Breast epithelium (tissue), 4 donors: ENCODE measurements at regions of chr15 and their contacts with region 1.

Region 1: GRCh38 chr15:89057504-89058133 is 30.6 kb upstream of the ABHD2 start:
- DNase-seq: peak; percentile 64 to 86
- H3K4me3 ChIP-seq: no peak overlapping the region
- H3K27ac ChIP-seq: no peak overlapping the region
- H3K4me1 ChIP-seq: no peaks in the 10 kb centered on the region
- H3K27me3 ChIP-seq: no peaks in the 10 kb centered on the region
- CTCF ChIP-seq: peak; percentile 91 to 97 (median 93)
- POLR2A ChIP-seq: no peak

Region 2: GRCh38 chr15:89003865-89004725 is 53.5 kb before region 1 on chr15:
- intact Hi-C with region 1: no loop called
- DNase-seq: no peak
- H3K4me3 ChIP-seq: no peak overlapping the region
- H3K27ac ChIP-seq: no peak overlapping the region
- H3K4me1 ChIP-seq: peaks cover 0 to 12% of the 10 kb centered on the region in 2 donors
- H3K27me3 ChIP-seq: no peaks in the 10 kb centered on the region
- CTCF ChIP-seq: no peak
- POLR2A ChIP-seq: no peak

Region 3: DNA sequence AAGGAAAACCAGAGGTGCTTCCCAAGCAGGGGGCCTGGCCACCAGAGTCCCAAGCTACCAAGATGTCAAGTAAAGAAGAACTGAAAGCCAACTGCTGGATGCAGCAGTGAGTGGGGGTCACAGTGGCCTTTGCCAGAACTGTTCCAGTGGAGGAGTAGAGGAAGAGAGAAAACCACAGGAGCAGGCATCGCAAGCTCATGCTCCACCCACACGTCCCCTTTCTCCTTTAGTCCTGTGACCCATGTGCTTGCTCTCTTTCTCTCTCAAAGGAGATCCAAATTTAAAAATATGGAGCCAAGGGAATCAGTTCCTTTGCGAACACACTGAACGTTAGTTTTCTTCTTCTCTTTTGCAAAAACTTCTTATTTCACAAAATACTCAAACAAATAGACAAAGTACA is 18.2 kb after region 1 on chr15:
- intact Hi-C with region 1: no loop called
- DNase-seq: no peak
- H3K4me3 ChIP-seq: no peak overlapping the region
- H3K27ac ChIP-seq: no peak overlapping the region
- H3K4me1 ChIP-seq: no peaks in the 10 kb centered on the region
- H3K27me3 ChIP-seq: no peaks in the 10 kb centered on the region
- CTCF ChIP-seq: no peak
- POLR2A ChIP-seq: no peak

Region 4: GRCh38 chr15:89129123-89129815 is 71.7 kb after region 1 on chr15:
- intact Hi-C with region 1: loop called (anchors 10 kb)
- DNase-seq: no peak
- H3K4me3 ChIP-seq: no peak overlapping the region
- H3K27ac ChIP-seq: no peak overlapping the region
- H3K4me1 ChIP-seq: no peaks in the 10 kb centered on the region
- H3K27me3 ChIP-seq: no peaks in the 10 kb centered on the region
- CTCF ChIP-seq: peak; percentile 42 to 54 (median 49)
- POLR2A ChIP-seq: no peak

Region 5: GRCh38 chr15:89177633-89178306 is 120.2 kb after region 1 on chr15:
- intact Hi-C with region 1: loop called (anchors 10 kb)
- DNase-seq: no peak
- H3K4me3 ChIP-seq: no peak overlapping the region
- H3K27ac ChIP-seq: no peak overlapping the region
- H3K4me1 ChIP-seq: no peaks in the 10 kb centered on the region
- H3K27me3 ChIP-seq: no peaks in the 10 kb centered on the region
- CTCF ChIP-seq: peak; percentile 58 to 90 (median 76)
- POLR2A ChIP-seq: no peak

Region 6: GRCh38 chr15:90667073-90667754 is 1609.6 kb after region 1 on chr15:
- intact Hi-C with region 1: no loop called
- DNase-seq: no peak
- H3K4me3 ChIP-seq: no peak overlapping the region
- H3K27ac ChIP-seq: no peak overlapping the region
- H3K4me1 ChIP-seq: no peaks in the 10 kb centered on the region
- H3K27me3 ChIP-seq: no peaks in the 10 kb centered on the region
- CTCF ChIP-seq: no peak
- POLR2A ChIP-seq: no peak